CD4-positive, alpha-beta memory T cell (primary cell): ENCODE measurements at regions of chr16 and their contacts with region 1.

Region 1: GRCh38 chr16:50266337-50267091 is at the start of gene ADCY7:
- DNase-seq: peak; percentile 77 to 92 (median 80)
- H3K4me3 ChIP-seq: peak within 1 kb of the TSS; percentile 75 to 76
- H3K4me3 Mint-ChIP-seq: peak within 1 kb of the TSS; percentile 93 to 99 (median 98)
- H3K27ac ChIP-seq: peak within 1 kb of the TSS; percentile 81
- H3K27ac Mint-ChIP-seq: peak within 1 kb of the TSS; percentile 95 to 99 (median 98)
- H3K4me1 ChIP-seq: peaks cover 60% of the 10 kb centered on the region
- H3K4me1 Mint-ChIP-seq: peaks cover 40 to 84% (median 56%) of the 10 kb centered on the region in 4 donors
- H3K27me3 ChIP-seq: no peaks in the 10 kb centered on the region
- H3K27me3 Mint-ChIP-seq: no peaks in the 10 kb centered on the region
- total RNA-seq, gene ADCY7: 230 to 235 TPM

Region 2: DNA sequence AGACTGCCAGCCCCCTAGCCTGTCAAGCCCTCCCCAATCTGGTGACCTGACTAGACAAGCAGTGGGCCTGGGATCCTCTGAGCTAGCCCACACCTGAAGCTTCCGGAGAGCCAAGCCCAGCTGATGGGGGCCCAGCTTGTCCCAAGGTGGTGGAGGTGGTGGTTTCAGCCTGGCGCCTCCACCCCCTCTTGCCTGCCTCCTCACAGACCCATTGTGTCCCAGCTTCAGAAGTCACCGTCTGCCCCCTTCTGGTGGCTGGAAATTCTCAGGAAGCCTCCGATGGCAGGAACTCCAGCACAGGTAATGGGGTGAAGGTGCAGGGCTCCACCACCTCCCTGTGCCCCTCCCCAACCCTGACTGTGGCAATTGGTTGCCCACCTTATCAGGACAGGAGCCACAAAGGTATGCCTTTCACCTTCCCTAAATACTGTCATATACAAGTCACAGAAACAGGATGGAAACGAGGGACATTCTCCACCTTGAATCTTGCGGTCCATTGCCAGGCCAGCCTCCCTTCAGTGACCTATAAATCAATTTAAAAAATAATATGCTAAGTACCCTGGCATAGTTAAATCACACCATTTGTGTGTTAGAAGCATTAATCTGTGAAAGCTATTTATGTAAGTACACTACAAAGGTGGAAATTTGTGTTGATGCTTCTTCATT is 344.6 kb before region 1 on chr16:
- CTCF ChIA-PET with region 1: no interaction called
- POLR2A ChIA-PET with region 1: no interaction called
- intact Hi-C with region 1: no loop called
- DNase-seq: peak in 4 of 5 donors; percentile 5 to 23 (median 14)
- H3K4me3 ChIP-seq: no peak overlapping the region
- H3K4me3 Mint-ChIP-seq: no peak overlapping the region
- H3K27ac ChIP-seq: no peak overlapping the region
- H3K27ac Mint-ChIP-seq: peak overlapping the region in 1 of 7 donors; percentile 18
- H3K4me1 ChIP-seq: no peaks in the 10 kb centered on the region
- H3K4me1 Mint-ChIP-seq: no peaks in the 10 kb centered on the region
- H3K27me3 ChIP-seq: no peaks in the 10 kb centered on the region
- H3K27me3 Mint-ChIP-seq: peaks cover 7 to 8% of the 10 kb centered on the region in 2 donors

Region 3: GRCh38 chr16:50281964-50282538 is 15.5 kb after region 1 on chr16:
- CTCF ChIA-PET with region 1: interaction called, 99 read pairs
- POLR2A ChIA-PET with region 1: interaction called, 252 read pairs
- intact Hi-C with region 1: loop called (anchors 2 kb)
- DNase-seq: peak; percentile 62 to 84 (median 67)
- H3K4me3 ChIP-seq: peak overlapping the region in 1 of 2 donors; percentile 21
- H3K4me3 Mint-ChIP-seq: peak overlapping the region; percentile 76 to 92 (median 82)
- H3K27ac ChIP-seq: peak overlapping the region; percentile 57
- H3K27ac Mint-ChIP-seq: peak overlapping the region; percentile 77 to 99 (median 91)
- H3K4me1 ChIP-seq: peaks cover 94% of the 10 kb centered on the region
- H3K4me1 Mint-ChIP-seq: peaks cover 59 to 94% (median 81%) of the 10 kb centered on the region in 4 donors
- H3K27me3 ChIP-seq: no peaks in the 10 kb centered on the region
- H3K27me3 Mint-ChIP-seq: no peaks in the 10 kb centered on the region

Region 4: GRCh38 chr16:50338371-50339231 is 72.1 kb after region 1 on chr16:
- CTCF ChIA-PET with region 1: no interaction called
- POLR2A ChIA-PET with region 1: interaction called, 63 read pairs
- intact Hi-C with region 1: no loop called
- DNase-seq: peak; percentile 51 to 86 (median 73)
- H3K4me3 ChIP-seq: no peak overlapping the region
- H3K4me3 Mint-ChIP-seq: peak overlapping the region; percentile 2 to 72 (median 49)
- H3K27ac ChIP-seq: peak overlapping the region; percentile 79
- H3K27ac Mint-ChIP-seq: peak overlapping the region; percentile 88 to 99 (median 95)
- H3K4me1 ChIP-seq: peaks cover 34% of the 10 kb centered on the region
- H3K4me1 Mint-ChIP-seq: peaks cover 25 to 61% (median 44%) of the 10 kb centered on the region in 4 donors
- H3K27me3 ChIP-seq: no peaks in the 10 kb centered on the region
- H3K27me3 Mint-ChIP-seq: no peaks in the 10 kb centered on the region

Region 5: GRCh38 chr16:50548125-50548908 is 281.8 kb after region 1 on chr16 and contains the start of gene NKD1:
- CTCF ChIA-PET with region 1: no interaction called
- POLR2A ChIA-PET with region 1: no interaction called
- intact Hi-C with region 1: loop called (anchors 5 kb)
- DNase-seq: peak; percentile 64 to 78 (median 69)
- H3K4me3 ChIP-seq: peak within 1 kb of the TSS in 1 of 2 donors; percentile 68
- H3K4me3 Mint-ChIP-seq: peak within 1 kb of the TSS; percentile 81 to 89 (median 88)
- H3K27ac ChIP-seq: peak within 1 kb of the TSS; percentile 43
- H3K27ac Mint-ChIP-seq: peak within 1 kb of the TSS; percentile 90 to 96 (median 95)
- H3K4me1 ChIP-seq: peaks cover 30% of the 10 kb centered on the region
- H3K4me1 Mint-ChIP-seq: peaks cover 14 to 35% (median 25%) of the 10 kb centered on the region in 4 donors
- H3K27me3 ChIP-seq: no peaks in the 10 kb centered on the region
- H3K27me3 Mint-ChIP-seq: no peaks in the 10 kb centered on the region
- total RNA-seq, gene NKD1: 3.8 to 4.6 TPM